Dorsolateral prefrontal cortex (tissue), 120 donors: ENCODE measurements at regions of chr12 and their contacts with region 1.

Region 1: DNA sequence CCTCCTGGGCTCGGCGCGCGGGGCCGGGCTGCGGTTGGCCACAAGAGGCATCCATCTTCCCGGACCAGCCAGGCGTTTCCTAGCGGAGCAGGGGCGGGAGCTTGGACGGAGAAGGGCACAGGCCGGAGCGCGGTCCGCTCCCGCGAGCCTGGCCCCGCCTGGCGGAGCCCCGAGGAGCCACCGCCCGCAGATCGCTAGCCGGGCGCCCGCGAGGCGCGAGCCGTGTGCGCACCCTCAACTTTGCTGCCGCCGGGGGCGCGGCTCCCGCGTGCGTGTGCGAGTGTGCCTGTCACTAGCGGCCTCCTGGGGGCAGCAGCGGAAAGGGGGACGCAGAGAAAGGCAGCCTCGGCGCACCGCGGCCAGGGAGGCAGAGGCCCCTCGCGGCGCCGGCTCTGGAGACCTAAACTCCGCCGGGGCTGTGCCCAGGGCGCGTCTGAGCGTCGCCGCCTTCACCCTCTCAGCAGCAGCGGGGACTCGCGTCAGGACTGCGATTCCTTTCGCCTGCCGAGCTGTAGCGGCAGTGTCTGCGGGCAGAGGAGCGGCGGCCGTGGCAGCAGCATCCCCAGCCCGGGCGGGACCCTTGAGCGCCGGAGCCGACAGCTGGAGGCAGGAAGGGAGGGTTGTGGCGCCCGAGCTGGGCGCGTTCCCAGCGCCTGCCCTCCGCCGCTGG is 644 bp upstream of the SRGAP1 start:
- DNase-seq: peak; percentile 75 to 92 (median 85)
- H3K4me3 ChIP-seq: peak overlapping the region; percentile 58 to 99 (median 91)
- H3K27ac ChIP-seq: peak overlapping the region; percentile 55 to 97 (median 93)
- H3K27me3 ChIP-seq: no peaks in the 10 kb centered on the region
- CTCF ChIP-seq: peak; percentile 76 to 99 (median 93)

Region 2: DNA sequence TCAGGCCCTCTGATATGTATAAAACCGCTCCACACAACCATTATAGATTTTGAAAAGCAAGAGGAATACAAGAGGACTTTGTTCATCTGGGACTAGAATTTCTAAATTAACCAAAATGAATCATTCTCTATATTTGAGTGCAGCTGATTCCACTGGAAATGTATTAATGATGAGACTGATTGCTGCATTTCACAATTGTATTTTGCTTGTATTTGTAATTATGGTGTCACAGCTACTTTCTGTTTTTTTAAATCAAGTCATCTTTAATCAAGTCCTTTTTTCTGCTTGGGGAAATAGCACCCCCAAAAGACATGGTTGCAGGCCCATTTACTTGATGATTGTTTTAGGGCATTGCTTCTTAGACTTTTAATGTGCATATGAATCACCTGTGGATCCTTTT is 215.8 kb after region 1 on chr12:
- intact Hi-C with region 1: loop called (anchors 1 to 5 kb)
- DNase-seq: peak in 1 of 10 donors; percentile 25
- H3K4me3 ChIP-seq: peak overlapping the region in 28 of 59 donors; percentile 0 to 40 (median 19)
- H3K27ac ChIP-seq: peak overlapping the region in 54 of 59 donors; percentile 9 to 86 (median 75)
- H3K27me3 ChIP-seq: no peaks in the 10 kb centered on the region
- CTCF ChIP-seq: peak in 39 of 56 donors; percentile 9 to 64 (median 33)

Region 3: DNA sequence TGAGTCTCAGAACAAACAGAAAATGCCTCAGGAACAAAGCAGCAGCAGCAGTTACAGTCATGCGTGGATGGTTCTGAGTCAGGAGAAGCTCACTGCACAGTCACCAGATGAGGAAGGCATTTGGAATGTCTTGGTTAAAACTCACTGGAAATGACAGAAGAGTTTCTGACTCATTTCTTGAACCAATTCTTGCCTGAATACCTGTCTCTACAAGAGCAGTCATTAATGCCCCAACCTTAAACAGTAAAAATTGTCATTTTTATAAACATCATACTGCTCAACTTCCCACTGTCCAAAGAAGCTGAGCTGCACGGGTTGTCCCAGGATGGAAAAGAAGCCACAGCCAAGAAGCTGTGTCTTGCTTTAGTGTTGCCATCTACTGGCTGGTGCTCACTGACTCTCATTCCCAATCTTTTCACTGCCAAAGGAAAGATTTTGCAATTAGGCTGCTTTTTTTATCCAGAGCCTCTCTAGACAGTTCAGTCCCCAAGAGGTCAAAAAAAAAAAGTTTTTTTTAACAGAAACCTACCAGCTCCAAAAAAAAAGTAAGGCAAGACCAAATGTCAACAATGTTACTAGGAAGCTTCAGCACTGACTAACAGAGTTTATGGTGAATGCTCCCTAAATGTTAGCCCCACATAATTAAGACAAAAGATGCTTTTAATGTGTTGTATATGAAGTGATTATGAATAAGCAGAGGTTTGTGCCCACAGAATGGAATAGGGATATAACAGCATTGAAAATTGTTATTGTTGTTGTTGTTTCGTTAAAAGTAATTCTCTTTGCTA is 337.8 kb after region 1 on chr12:
- intact Hi-C with region 1: loop called (anchors 1 to 2 kb)
- DNase-seq: peak in 9 of 10 donors; percentile 5 to 72 (median 49)
- H3K4me3 ChIP-seq: peak overlapping the region in 1 of 59 donors; percentile 1
- H3K27ac ChIP-seq: peak overlapping the region in 14 of 59 donors; percentile 7 to 54 (median 30)
- H3K27me3 ChIP-seq: no peaks in the 10 kb centered on the region
- CTCF ChIP-seq: peak; percentile 45 to 87 (median 75)

Region 4: DNA sequence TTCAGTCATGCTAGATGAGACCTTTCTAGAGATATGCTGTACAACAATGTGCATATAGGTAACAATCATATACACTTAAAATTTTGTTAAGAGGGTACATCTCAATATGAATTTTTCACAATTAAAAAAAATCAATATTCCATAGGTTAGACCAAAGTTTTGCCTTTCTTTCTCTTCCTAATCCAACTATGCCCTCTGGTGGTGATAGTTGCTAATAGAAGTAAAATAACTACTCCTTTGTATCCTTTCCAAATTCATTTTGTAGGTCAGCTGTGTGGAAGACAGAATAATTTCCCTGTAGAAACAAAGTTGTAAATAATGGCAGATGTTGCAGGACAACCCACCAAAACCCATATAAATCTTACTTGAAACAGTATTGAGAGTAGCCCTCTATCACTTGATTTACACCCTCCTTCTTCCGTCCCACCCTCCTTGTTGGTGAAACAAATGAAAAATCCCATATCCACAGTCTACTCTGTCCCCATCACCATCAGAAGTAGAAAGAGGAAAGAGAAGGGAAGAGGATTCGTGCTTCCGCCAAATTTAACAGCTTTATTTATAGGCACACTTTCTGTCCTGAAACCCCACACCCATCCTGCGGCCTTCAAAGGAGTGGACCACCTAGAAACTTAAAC is 412.4 kb after region 1 on chr12:
- intact Hi-C with region 1: loop called (anchors 1 to 2 kb)
- DNase-seq: no peak
- H3K4me3 ChIP-seq: peak overlapping the region in 24 of 59 donors; percentile 1 to 44 (median 23)
- H3K27ac ChIP-seq: peak overlapping the region in 47 of 59 donors; percentile 4 to 88 (median 65)
- H3K27me3 ChIP-seq: no peaks in the 10 kb centered on the region
- CTCF ChIP-seq: peak; percentile 66 to 96 (median 82)